B cell (primary cell): ENCODE measurements at regions of chr10 and their contacts with region 1.

Region 1: GRCh38 chr10:107425831-107426553 is 261.5 kb upstream of the SORCS1 start:
- DNase-seq: no peak
- ATAC-seq: no peak
- H3K4me3 ChIP-seq: peak overlapping the region in 2 of 5 experiments; percentile 27 to 41
- H3K4me3 Mint-ChIP-seq: peak overlapping the region; percentile 57
- H3K27ac ChIP-seq: no peak overlapping the region
- H3K27ac Mint-ChIP-seq: no peak overlapping the region
- H3K4me1 ChIP-seq: peaks cover 0 to 13% of the 10 kb centered on the region in 2 donors
- H3K4me1 Mint-ChIP-seq: peaks cover 6% of the 10 kb centered on the region
- H3K27me3 ChIP-seq: no peaks in the 10 kb centered on the region
- H3K27me3 Mint-ChIP-seq: no peaks in the 10 kb centered on the region
- CTCF ChIP-seq: no peak

Region 2: GRCh38 chr10:107340326-107340725 is 85.7 kb before region 1 on chr10:
- CTCF ChIA-PET with region 1: no interaction called
- POLR2A ChIA-PET with region 1: no interaction called
- intact Hi-C with region 1: no loop called
- DNase-seq: no peak
- ATAC-seq: no peak
- H3K4me3 ChIP-seq: no peak overlapping the region
- H3K4me3 Mint-ChIP-seq: no peak overlapping the region
- H3K27ac ChIP-seq: no peak overlapping the region
- H3K27ac Mint-ChIP-seq: no peak overlapping the region
- H3K4me1 ChIP-seq: no peaks in the 10 kb centered on the region
- H3K4me1 Mint-ChIP-seq: no peaks in the 10 kb centered on the region
- H3K27me3 ChIP-seq: no peaks in the 10 kb centered on the region
- H3K27me3 Mint-ChIP-seq: no peaks in the 10 kb centered on the region
- CTCF ChIP-seq: no peak

Region 3: GRCh38 chr10:107442035-107442505 is 16.1 kb after region 1 on chr10:
- CTCF ChIA-PET with region 1: no interaction called
- POLR2A ChIA-PET with region 1: no interaction called
- intact Hi-C with region 1: no loop called
- DNase-seq: no peak
- ATAC-seq: no peak
- H3K4me3 ChIP-seq: no peak overlapping the region
- H3K4me3 Mint-ChIP-seq: no peak overlapping the region
- H3K27ac ChIP-seq: no peak overlapping the region
- H3K27ac Mint-ChIP-seq: no peak overlapping the region
- H3K4me1 ChIP-seq: peaks cover 0 to 9% of the 10 kb centered on the region in 2 donors
- H3K4me1 Mint-ChIP-seq: peaks cover 1% of the 10 kb centered on the region
- H3K27me3 ChIP-seq: no peaks in the 10 kb centered on the region
- H3K27me3 Mint-ChIP-seq: no peaks in the 10 kb centered on the region
- CTCF ChIP-seq: no peak

Region 4: GRCh38 chr10:107553470-107553869 is 127.5 kb after region 1 on chr10:
- CTCF ChIA-PET with region 1: no interaction called
- POLR2A ChIA-PET with region 1: no interaction called
- intact Hi-C with region 1: loop called (anchors 10 kb)
- DNase-seq: peak; percentile 64
- ATAC-seq: peak; percentile 53
- H3K4me3 ChIP-seq: no peak overlapping the region
- H3K4me3 Mint-ChIP-seq: no peak overlapping the region
- H3K27ac ChIP-seq: no peak overlapping the region
- H3K27ac Mint-ChIP-seq: no peak overlapping the region
- H3K4me1 ChIP-seq: peaks cover 8 to 21% of the 10 kb centered on the region in 2 donors
- H3K4me1 Mint-ChIP-seq: peaks cover 15% of the 10 kb centered on the region
- H3K27me3 ChIP-seq: no peaks in the 10 kb centered on the region
- H3K27me3 Mint-ChIP-seq: no peaks in the 10 kb centered on the region
- CTCF ChIP-seq: no peak